Ascending aorta (tissue), 2 donors: ENCODE measurements at regions of chr6 and their contacts with region 1.

Region 1: GRCh38 chr6:148524976-148525375 is 182.3 kb downstream of the SASH1 start:
- DNase-seq: peak in 1 of 2 donors; percentile 77
- H3K4me3 ChIP-seq: peak overlapping the region; percentile 24 to 57
- H3K27ac ChIP-seq: peak overlapping the region; percentile 82 to 85
- H3K4me1 ChIP-seq: peaks cover 0 to 44% of the 10 kb centered on the region in 2 donors
- H3K27me3 ChIP-seq: no peaks in the 10 kb centered on the region
- CTCF ChIP-seq: no peak

Region 2: GRCh38 chr6:148223424-148223842 is 301.5 kb before region 1 on chr6:
- intact Hi-C with region 1: no loop called
- DNase-seq: no peak
- H3K4me3 ChIP-seq: no peak overlapping the region
- H3K27ac ChIP-seq: no peak overlapping the region
- H3K4me1 ChIP-seq: peaks cover 0 to 4% of the 10 kb centered on the region in 2 donors
- H3K27me3 ChIP-seq: no peaks in the 10 kb centered on the region
- CTCF ChIP-seq: no peak

Region 3: DNA sequence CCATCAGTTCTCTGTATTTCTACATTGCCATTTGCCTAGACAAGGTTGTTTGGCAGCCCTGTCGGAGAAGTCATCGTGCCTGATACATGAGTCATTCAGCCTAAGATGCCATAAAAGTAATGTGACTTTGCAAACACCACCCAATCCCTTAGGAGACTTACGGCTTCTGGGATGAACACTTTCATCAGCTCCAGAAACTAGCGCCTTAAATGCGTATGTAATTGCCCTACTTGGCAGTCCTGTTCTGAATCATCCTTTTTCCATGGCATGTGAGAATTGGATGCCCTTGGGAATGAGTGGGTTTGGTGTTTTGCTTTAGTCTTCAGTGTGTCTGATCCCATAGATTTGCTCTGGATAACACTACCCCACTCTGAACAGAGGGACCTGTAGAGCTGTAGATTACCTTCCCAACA is 23.8 kb before region 1 on chr6:
- intact Hi-C with region 1: loop called (anchors 1 kb)
- DNase-seq: peak in 1 of 2 donors; percentile 89
- H3K4me3 ChIP-seq: peak overlapping the region in 1 of 2 donors; percentile 33
- H3K27ac ChIP-seq: peak overlapping the region; percentile 87 to 88
- H3K4me1 ChIP-seq: peaks cover 0 to 37% of the 10 kb centered on the region in 2 donors
- H3K27me3 ChIP-seq: no peaks in the 10 kb centered on the region
- CTCF ChIP-seq: no peak

Region 4: GRCh38 chr6:148509800-148510581 is 15.0 kb before region 1 on chr6:
- intact Hi-C with region 1: loop called (anchors 2 kb)
- DNase-seq: peak in 1 of 2 donors; percentile 89
- H3K4me3 ChIP-seq: peak overlapping the region; percentile 51 to 67
- H3K27ac ChIP-seq: peak overlapping the region; percentile 84 to 86
- H3K4me1 ChIP-seq: peaks cover 0 to 9% of the 10 kb centered on the region in 2 donors
- H3K27me3 ChIP-seq: no peaks in the 10 kb centered on the region
- CTCF ChIP-seq: no peak

Region 5: DNA sequence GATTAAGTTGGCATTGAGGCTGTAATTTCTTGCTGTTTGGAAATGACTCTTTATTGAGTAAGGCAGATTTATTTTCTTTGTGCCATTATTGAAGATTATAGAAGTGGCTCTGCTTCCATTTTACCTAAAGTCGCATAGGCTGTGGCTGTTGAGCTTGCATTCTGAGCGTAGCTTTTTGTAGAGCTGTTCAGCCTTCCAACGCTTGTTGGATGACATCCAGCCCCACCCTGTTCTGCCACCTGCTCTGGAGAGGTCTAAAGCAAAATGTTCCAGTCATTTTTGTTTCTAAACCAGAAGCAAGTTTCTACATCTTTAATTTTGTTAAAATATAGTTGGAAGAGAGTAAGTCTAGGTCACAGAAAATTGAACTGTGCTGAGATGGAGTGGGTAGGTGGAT is 246.2 kb after region 1 on chr6:
- intact Hi-C with region 1: no loop called
- DNase-seq: no peak
- H3K4me3 ChIP-seq: no peak overlapping the region
- H3K27ac ChIP-seq: no peak overlapping the region
- H3K4me1 ChIP-seq: peaks cover 0 to 9% of the 10 kb centered on the region in 2 donors
- H3K27me3 ChIP-seq: no peaks in the 10 kb centered on the region
- CTCF ChIP-seq: no peak